Aorta (tissue), 5 donors: ENCODE measurements at regions of chr3 and their contacts with region 1.

Region 1: DNA sequence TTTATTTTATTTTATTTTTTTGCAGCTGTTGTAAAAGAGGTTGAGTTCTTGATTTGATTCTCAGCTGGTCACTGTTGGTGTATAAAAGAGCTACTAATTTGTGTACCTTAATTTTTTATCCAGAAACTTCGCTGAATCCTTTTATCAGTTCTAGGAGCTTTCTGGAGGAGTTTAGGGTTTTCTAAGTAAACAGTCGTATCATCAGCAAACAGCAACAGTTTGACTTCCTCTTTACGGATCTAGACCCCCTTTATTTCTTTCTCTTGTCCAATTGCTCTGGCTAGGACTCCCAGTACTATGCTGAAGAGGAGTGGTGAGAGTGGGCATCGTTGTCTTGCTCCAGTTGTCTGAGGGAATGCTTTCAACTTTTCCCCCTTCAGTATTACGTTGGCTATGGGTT is 165.8 kb upstream of the KCNMB2 start:
- DNase-seq: no peak
- ATAC-seq: no peak
- H3K4me3 ChIP-seq: no peak overlapping the region
- H3K27ac ChIP-seq: no peak overlapping the region
- H3K4me1 ChIP-seq: peaks cover 2 to 3% of the 10 kb centered on the region in 2 donors
- H3K27me3 ChIP-seq: no peaks in the 10 kb centered on the region

Region 2: GRCh38 chr3:177816667-177817208 is 553.6 kb before region 1 on chr3:
- intact Hi-C with region 1: loop called in 1 of 2 experiments (anchors 10 kb)
- DNase-seq: no peak
- ATAC-seq: peak; percentile 63
- H3K4me3 ChIP-seq: no peak overlapping the region
- H3K27ac ChIP-seq: peak overlapping the region; percentile 52 to 80
- H3K4me1 ChIP-seq: no peaks in the 10 kb centered on the region
- H3K27me3 ChIP-seq: no peaks in the 10 kb centered on the region

Region 3: GRCh38 chr3:178320456-178321351 is 49.7 kb before region 1 on chr3:
- intact Hi-C with region 1: no loop called
- DNase-seq: no peak
- ATAC-seq: peak; percentile 73
- H3K4me3 ChIP-seq: no peak overlapping the region
- H3K27ac ChIP-seq: no peak overlapping the region
- H3K4me1 ChIP-seq: peaks cover 0 to 6% of the 10 kb centered on the region in 2 donors
- H3K27me3 ChIP-seq: no peaks in the 10 kb centered on the region